Ascending aorta (tissue), 2 donors: ENCODE measurements at regions of chr5 and their contacts with region 1.

Region 1: DNA sequence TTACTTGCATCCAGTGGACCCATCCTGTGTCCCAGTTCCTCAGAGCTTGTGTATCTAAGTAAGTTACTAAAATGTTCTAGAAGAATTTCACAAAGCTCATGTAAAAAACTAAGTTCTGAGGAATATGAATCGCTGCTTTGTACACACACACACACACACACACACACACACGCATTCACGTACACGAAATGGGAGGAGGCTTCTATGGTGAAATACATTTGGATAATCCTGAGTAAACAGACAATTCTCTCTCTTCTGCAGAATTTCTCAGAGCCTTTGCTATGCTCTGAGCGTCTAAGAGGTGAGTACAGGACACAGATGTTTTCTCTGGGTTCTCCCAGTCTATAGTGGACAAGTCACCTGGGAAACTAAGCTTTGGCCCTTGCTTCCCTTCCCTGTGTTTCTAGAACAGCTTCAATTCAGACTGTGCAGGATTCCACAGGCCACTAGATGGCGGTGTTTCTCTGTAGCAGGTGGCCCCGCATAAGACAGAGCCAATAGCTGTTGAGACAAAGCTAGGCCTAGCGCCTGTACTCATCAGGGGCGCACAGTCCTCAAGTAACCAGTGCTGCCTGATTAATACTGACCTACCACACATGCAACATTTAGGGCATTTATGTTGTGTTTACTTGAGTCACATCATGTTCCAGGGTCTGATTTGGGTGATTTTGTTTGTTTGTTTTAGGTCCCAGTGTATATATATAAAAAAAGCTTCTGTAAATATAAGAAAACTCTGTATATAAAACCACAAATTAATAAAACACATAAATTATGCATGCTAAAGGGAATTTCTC is 114.8 kb downstream of the LIFR start:
- DNase-seq: peak; percentile 36 to 94
- H3K4me3 ChIP-seq: no peak overlapping the region
- H3K27ac ChIP-seq: no peak overlapping the region
- H3K4me1 ChIP-seq: peaks cover 0 to 7% of the 10 kb centered on the region in 2 donors
- H3K27me3 ChIP-seq: no peaks in the 10 kb centered on the region
- CTCF ChIP-seq: peak; percentile 91 to 96 (median 95)

Region 2: DNA sequence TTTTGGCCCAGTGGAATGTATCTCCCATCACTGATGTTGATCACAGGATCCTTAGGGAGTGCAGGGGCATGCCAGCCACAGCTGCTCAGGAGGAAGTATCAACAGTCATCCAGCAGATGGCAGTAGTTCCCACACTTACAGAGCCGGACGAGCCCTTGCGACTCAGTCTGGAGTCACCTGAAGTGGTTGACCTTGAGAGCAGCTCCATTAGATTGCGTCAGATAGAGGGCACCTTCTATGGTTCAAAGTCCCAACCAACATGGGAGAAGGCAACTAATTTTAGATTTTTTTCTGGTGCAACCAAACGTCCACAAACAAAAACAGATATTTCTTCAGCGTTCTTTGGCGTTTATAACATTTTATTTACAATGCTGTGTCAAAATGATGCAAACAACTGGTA is 58.8 kb before region 1 on chr5:
- intact Hi-C with region 1: loop called (anchors 5 kb)
- DNase-seq: peak; percentile 14 to 69
- H3K4me3 ChIP-seq: no peak overlapping the region
- H3K27ac ChIP-seq: no peak overlapping the region
- H3K4me1 ChIP-seq: no peaks in the 10 kb centered on the region
- H3K27me3 ChIP-seq: no peaks in the 10 kb centered on the region
- CTCF ChIP-seq: peak; percentile 69 to 88 (median 84)

Region 3: GRCh38 chr5:38467353-38468040 is 25.8 kb after region 1 on chr5:
- intact Hi-C with region 1: loop called (anchors 1 kb)
- DNase-seq: peak in 1 of 2 donors; percentile 91
- H3K4me3 ChIP-seq: peak overlapping the region in 1 of 2 donors; percentile 41
- H3K27ac ChIP-seq: peak overlapping the region; percentile 91 to 95
- H3K4me1 ChIP-seq: peaks cover 32 to 66% of the 10 kb centered on the region in 2 donors
- H3K27me3 ChIP-seq: no peaks in the 10 kb centered on the region
- CTCF ChIP-seq: no peak

Region 4: GRCh38 chr5:38548064-38548759 is 106.6 kb after region 1 on chr5:
- intact Hi-C with region 1: loop called (anchors 5 kb)
- DNase-seq: no peak
- H3K4me3 ChIP-seq: peak overlapping the region in 1 of 2 donors; percentile 26
- H3K27ac ChIP-seq: peak overlapping the region; percentile 39 to 72
- H3K4me1 ChIP-seq: peaks cover 5 to 32% of the 10 kb centered on the region in 2 donors
- H3K27me3 ChIP-seq: no peaks in the 10 kb centered on the region
- CTCF ChIP-seq: no peak

Region 5: GRCh38 chr5:38556599-38557305 is 115.1 kb after region 1 on chr5 and contains the start of gene LIFR:
- intact Hi-C with region 1: loop called (anchors 2 kb)
- DNase-seq: peak in 1 of 2 donors; percentile 86
- H3K4me3 ChIP-seq: peak within 1 kb of the TSS; percentile 78 to 91
- H3K27ac ChIP-seq: peak within 1 kb of the TSS; percentile 91 to 99
- H3K4me1 ChIP-seq: peaks cover 0 to 9% of the 10 kb centered on the region in 2 donors
- H3K27me3 ChIP-seq: no peaks in the 10 kb centered on the region
- CTCF ChIP-seq: no peak
- total RNA-seq, gene LIFR: 116 TPM

Region 6: DNA sequence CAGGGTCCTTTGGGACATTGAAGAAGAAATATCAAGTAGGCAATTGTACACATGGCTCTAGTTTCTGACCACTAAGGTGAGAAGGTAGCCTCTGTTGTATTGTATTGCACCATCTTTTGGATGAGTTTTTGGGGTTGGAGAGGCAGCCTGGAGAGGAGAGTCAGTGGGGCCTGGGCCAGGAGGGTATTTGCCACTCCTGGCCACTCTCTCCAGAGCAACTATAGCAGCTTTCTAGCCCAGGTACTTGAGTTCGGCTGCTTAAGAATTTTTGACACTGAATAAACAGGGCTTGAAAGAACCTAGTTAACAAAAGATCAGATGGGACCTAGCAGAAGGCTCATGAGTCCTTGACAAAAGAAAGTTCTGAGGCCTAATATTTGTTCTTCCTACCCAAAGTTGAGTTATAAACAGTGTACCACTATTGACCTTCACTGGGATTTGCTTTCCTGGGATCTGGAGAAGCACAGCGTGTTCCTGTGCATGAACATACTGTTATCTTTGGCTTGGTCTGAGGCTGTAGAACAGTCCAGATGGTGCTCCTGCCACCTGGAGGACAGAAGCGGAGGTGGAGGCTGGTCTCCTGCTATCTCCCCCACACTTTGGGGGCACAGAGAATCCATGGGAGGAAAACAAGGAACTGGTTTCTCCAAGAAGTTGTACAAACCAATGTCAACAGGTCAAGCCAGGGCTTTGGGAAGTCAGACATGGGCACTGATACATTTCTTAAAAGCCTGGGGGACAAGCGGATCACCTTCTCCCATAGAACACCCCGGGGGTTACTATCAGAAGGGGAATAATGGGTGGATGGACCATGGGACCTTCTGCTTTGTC is 225.2 kb after region 1 on chr5:
- intact Hi-C with region 1: loop called (anchors 1 kb)
- DNase-seq: peak in 1 of 2 donors; percentile 78
- H3K4me3 ChIP-seq: no peak overlapping the region
- H3K27ac ChIP-seq: peak overlapping the region; percentile 65 to 75
- H3K4me1 ChIP-seq: peaks cover 6 to 26% of the 10 kb centered on the region in 2 donors
- H3K27me3 ChIP-seq: no peaks in the 10 kb centered on the region
- CTCF ChIP-seq: peak; percentile 66 to 85 (median 70)

Region 7: DNA sequence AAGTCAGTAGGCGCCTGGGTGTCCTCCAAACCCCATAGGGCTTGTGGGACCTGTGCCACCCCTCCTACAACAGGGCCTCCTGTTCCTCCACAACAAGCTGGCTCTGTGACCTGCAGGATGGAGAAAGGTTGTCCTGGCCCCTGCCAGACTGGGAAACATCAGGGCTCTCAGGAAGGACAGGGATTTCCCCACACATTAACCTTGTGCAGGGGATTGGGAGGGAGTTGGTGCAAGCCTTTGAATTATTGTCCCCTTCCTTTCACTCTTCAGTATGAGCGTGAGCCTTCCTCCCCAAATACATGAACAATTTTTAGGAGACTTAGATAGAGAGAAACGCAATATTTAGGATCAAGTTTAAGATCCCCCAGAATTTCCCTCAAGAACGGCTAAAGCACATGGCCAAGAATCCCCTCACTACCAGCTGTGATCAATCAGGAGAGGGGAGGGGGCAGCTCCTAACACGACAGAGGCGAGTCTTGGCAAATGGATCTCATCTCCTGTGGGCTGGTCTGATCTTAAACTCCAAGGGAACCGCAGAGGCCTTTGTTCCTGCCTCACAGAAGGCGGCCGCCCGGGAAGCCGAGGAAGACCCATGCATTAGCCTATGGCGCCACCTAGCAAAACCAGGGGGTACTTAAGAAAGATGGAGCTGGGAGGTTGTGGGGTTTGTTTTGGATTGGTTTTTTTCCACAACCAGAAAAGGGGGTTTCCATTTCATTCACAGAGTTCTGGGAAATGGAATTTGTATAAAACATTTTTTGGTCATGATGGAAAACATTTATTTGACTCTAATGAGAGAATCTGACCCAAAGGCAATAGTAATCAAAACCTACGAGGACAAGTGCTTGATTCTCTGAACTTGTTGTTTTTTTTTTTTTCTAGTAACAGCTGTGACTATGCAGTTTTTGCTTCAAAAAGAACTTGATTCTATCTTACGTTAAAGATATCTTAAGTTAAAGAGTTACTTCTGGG is 368.0 kb after region 1 on chr5:
- intact Hi-C with region 1: loop called (anchors 1 kb)
- DNase-seq: peak; percentile 23 to 86
- H3K4me3 ChIP-seq: no peak overlapping the region
- H3K27ac ChIP-seq: no peak overlapping the region
- H3K4me1 ChIP-seq: no peaks in the 10 kb centered on the region
- H3K27me3 ChIP-seq: no peaks in the 10 kb centered on the region
- CTCF ChIP-seq: peak; percentile 79 to 87 (median 81)